Adrenal gland (tissue), 19 donors: ENCODE measurements at regions of chr4 and their contacts with region 1.

Region 1: DNA sequence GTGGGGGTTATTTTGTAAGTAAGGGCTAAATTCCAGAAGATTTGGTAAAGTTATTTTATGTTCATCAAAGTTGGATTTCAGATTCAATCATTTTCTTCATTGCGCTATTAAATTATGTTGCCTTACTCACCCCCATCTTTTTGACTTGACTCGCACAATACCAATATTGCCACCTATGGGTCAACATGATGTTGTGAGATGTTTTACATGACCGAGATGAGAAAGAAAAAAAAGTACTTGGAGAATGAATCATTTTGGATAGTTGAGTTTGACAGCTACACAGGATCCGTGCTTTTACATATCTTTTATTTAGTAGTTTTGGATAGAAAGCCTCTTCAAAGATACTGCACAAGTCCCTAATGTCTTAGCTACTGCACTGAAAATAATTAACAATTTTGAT is 224.2 kb upstream of the EMCN start:
- DNase-seq: peak in 1 of 7 donors; percentile 11
- H3K4me3 ChIP-seq: no peak overlapping the region
- H3K27ac ChIP-seq: no peak overlapping the region
- H3K4me1 ChIP-seq: peaks cover 4 to 7% of the 10 kb centered on the region in 2 donors
- H3K27me3 ChIP-seq: no peaks in the 10 kb centered on the region
- CTCF ChIP-seq: peak; percentile 36 to 60 (median 52)
- POLR2A ChIP-seq: no peak

Region 2: DNA sequence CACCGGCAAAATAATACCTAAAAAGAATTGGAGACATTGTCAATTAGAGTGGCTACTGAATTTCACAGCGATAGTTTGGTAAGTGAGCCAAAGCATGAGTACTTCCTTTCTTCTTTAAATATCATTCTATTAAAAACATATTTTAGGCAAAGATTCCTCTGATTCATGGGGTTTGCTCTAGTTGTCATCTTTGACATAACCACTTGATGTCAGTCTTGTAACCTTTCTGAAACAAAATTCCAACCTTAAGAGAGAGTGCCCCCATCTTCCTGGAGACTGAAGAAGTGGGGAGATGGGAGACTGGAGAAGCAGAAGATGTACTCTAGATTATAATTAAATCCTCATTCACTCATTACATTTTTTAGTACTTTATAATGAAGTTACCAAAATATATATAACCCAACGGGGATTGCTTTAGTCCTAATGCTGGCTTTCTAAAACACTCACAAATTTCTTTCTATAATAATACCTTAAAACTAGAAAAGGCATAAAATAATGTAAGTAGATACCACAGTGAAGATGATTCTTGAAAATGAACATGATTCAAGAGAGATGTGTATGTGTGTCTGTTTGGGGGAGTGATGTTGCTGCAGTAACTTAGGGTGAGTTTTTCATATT is 320.6 kb before region 1 on chr4:
- intact Hi-C with region 1: loop called in 1 of 2 experiments (anchors 10 kb)
- DNase-seq: no peak
- H3K4me3 ChIP-seq: peak overlapping the region in 1 of 4 donors; percentile 37
- H3K27ac ChIP-seq: no peak overlapping the region
- H3K4me1 ChIP-seq: peaks cover 6 to 8% of the 10 kb centered on the region in 2 donors
- H3K27me3 ChIP-seq: no peaks in the 10 kb centered on the region
- CTCF ChIP-seq: peak; percentile 18 to 73 (median 50)
- POLR2A ChIP-seq: no peak

Region 3: GRCh38 chr4:100591161-100591876 is 150.7 kb before region 1 on chr4:
- intact Hi-C with region 1: no loop called
- DNase-seq: peak; percentile 66 to 84 (median 73)
- H3K4me3 ChIP-seq: no peak overlapping the region
- H3K27ac ChIP-seq: no peak overlapping the region
- H3K4me1 ChIP-seq: peaks cover 7 to 17% of the 10 kb centered on the region in 2 donors
- H3K27me3 ChIP-seq: no peaks in the 10 kb centered on the region
- CTCF ChIP-seq: no peak
- POLR2A ChIP-seq: no peak

Region 4: DNA sequence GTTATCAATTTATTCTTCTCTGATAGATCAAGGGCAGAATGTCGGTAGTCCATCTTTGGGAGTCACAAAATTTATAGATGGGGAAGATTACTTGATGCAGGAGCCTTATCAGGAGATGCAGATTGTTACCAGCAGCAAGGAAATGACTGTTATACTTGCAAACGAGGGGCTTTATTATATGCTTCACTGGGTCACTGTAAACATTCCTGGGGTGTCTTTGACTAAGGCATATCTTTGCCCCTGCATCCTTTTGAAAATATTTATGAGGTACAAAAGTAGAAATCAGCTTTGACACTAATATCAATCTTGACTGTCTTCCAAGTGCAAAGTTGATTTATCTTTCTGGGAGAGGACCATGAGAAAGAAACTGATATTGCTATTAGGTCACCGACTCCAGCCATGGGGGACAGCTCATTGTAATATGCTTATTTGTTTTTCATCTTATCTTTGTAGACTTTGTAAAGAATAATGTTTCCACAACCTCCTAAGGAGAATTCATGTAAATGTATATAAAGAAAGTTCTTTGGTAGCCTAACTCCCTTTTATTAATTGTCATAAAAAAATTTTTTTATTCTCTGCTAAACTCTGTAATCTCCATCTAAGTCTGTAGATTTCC is 46.9 kb before region 1 on chr4:
- intact Hi-C with region 1: no loop called
- DNase-seq: no peak
- H3K4me3 ChIP-seq: no peak overlapping the region
- H3K27ac ChIP-seq: no peak overlapping the region
- H3K4me1 ChIP-seq: peaks cover 0 to 9% of the 10 kb centered on the region in 2 donors
- H3K27me3 ChIP-seq: no peaks in the 10 kb centered on the region
- CTCF ChIP-seq: no peak
- POLR2A ChIP-seq: no peak

Region 5: GRCh38 chr4:100872811-100873210 is 130.8 kb after region 1 on chr4:
- intact Hi-C with region 1: no loop called
- DNase-seq: no peak
- H3K4me3 ChIP-seq: no peak overlapping the region
- H3K27ac ChIP-seq: no peak overlapping the region
- H3K4me1 ChIP-seq: no peaks in the 10 kb centered on the region
- H3K27me3 ChIP-seq: no peaks in the 10 kb centered on the region
- CTCF ChIP-seq: no peak
- POLR2A ChIP-seq: no peak

Region 6: GRCh38 chr4:101355767-101356701 is 614.0 kb after region 1 on chr4:
- intact Hi-C with region 1: no loop called
- DNase-seq: no peak
- H3K4me3 ChIP-seq: no peak overlapping the region
- H3K27ac ChIP-seq: no peak overlapping the region
- H3K4me1 ChIP-seq: peaks cover 0 to 6% of the 10 kb centered on the region in 2 donors
- H3K27me3 ChIP-seq: no peaks in the 10 kb centered on the region
- CTCF ChIP-seq: no peak
- POLR2A ChIP-seq: no peak